ENCODE measurements at regions of chr16 and their contacts with region 1.

Region 1: GRCh38 chr16:81140930-81141780 is 45.0 kb upstream of the GCSH start:
- DNase-seq: peak; percentile 60
- H3K4me3 Mint-ChIP-seq: no peak overlapping the region
- H3K27ac Mint-ChIP-seq: peak overlapping the region; percentile 85
- H3K4me1 Mint-ChIP-seq: peaks cover 51% of the 10 kb centered on the region
- H3K27me3 Mint-ChIP-seq: no peaks in the 10 kb centered on the region
- CTCF ChIP-seq: peak; percentile 53

Region 2: DNA sequence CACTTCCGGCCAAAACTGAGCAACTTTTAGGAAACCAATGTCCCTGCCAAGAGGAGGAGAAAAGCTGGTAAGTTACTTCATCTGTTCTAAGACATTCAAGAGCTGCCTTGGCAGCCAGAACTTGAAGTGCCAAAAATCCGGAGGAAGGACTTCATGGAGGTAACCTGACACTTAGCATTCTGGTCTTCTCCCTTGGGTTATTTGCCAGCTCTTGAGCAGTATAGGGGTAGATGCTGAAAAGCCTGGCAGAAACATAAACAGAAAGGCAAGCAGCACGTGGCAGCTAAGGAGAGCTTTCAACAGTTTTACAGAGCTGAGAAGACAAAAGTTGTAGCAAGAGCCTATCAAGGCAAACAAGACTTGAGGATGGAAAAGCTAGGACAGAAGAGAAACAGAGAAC is 390.0 kb before region 1 on chr16:
- CTCF ChIA-PET with region 1: no interaction called
- intact Hi-C with region 1: no loop called
- DNase-seq: no peak
- H3K4me3 Mint-ChIP-seq: no peak overlapping the region
- H3K27ac Mint-ChIP-seq: no peak overlapping the region
- H3K4me1 Mint-ChIP-seq: no peaks in the 10 kb centered on the region
- H3K27me3 Mint-ChIP-seq: peaks cover 22% of the 10 kb centered on the region
- CTCF ChIP-seq: no peak

Region 3: DNA sequence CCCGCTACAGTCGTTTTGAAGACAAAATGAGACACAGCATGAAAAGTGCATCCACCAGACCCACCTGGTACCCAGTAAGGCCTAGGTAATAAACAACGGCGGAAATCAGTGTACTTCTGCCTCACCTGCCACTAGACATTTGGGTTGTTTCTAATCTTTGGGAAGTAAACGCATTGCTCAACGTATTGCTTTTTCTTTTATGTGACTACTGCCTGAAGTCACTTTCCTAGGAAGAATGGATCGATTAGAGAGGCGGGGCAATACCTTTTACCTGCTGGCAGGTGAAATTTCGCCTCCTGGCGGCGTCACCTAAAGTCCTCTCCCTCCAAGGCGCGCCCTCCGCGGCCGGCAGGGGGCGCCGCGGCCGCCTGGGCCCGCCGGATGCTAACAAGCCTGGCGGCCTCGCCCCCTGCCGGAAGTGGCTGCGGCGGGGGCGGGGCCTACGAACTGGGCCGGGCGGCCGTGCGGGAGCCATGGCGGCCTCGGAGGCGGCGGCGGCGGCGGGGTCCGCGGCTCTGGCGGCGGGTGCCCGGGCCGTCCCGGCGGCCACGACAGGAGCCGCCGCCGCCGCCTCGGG is 105.7 kb before region 1 on chr16 and contains the start of gene ATMIN:
- CTCF ChIA-PET with region 1: interaction called, 9 read pairs
- intact Hi-C with region 1: loop called (anchors 5 kb)
- DNase-seq: peak; percentile 97
- H3K4me3 Mint-ChIP-seq: peak within 1 kb of the TSS; percentile 80
- H3K27ac Mint-ChIP-seq: peak within 1 kb of the TSS; percentile 60
- H3K4me1 Mint-ChIP-seq: peaks cover 38% of the 10 kb centered on the region
- H3K27me3 Mint-ChIP-seq: no peaks in the 10 kb centered on the region
- CTCF ChIP-seq: peak; percentile 100
- total RNA-seq, gene ATMIN: 61.3 and 64.3 TPM in 2 replicates

Region 4: DNA sequence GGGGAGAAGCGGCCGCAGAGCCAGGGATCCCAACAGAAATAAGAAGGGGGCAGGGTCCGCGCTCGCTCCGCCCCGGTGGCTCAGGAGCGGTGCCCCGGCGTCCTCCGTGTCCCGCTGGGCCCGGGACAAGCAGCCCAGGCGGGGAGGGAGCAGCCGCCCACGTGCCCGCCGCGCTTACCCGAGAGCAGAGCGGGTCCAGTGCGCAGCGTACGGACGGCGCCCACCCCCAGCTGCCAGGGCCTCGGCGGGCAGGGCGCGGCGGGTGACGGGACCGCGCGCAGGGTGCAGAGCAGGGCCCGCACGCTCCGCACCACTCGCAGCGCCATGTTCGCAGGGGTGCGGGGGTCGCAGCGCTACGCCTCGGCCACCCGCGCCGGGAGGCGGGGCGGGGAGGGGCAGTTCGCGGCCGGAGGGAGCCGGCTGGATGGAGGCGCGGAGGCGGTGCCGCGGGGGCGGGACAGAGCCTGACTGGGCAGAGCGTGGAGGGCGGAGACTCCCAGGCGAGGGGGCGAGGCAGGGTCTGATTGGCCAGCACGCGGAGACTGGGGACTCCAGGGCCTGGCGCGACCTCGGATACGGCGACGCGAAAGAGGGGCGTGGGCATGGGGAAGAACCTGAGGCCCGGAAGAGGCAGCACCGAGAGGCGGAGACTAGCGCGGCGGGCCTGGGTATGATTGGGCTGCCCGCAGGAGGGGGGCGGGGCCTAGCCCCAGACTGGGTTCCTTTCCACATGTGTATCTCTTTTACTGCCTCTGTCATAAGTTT is 45.0 kb before region 1 on chr16 and contains the start of gene GCSH:
- CTCF ChIA-PET with region 1: interaction called, 3 read pairs
- intact Hi-C with region 1: loop called (anchors 5 kb)
- DNase-seq: peak; percentile 100
- H3K4me3 Mint-ChIP-seq: peak within 1 kb of the TSS; percentile 70
- H3K27ac Mint-ChIP-seq: peak within 1 kb of the TSS; percentile 74
- H3K4me1 Mint-ChIP-seq: peaks cover 35% of the 10 kb centered on the region
- H3K27me3 Mint-ChIP-seq: no peaks in the 10 kb centered on the region
- CTCF ChIP-seq: no peak
- total RNA-seq, gene GCSH: 85.2 and 109 TPM in 2 replicates

Region 5: DNA sequence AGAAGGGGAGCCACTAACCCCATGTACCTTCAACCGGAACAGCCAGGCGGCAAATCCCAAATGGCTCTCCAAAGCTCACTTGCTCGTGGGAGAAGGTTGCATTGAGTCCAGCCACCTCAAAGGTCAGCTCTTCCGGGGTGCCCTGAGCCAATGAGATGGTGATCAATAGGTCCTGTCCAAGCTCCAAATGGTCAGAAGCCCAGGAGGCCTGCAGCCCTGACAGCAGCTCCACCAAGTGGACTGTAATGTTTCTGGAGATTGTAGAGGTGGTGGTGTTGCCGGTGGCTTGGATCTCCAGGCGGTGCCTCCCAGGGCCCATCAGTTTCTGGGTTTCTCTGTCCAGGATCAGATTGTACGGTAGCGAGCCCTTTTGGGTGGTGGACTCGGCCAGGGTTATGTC is 57.5 kb after region 1 on chr16:
- CTCF ChIA-PET with region 1: interaction called, 4 read pairs
- intact Hi-C with region 1: loop called (anchors 2 kb)
- DNase-seq: peak; percentile 45
- H3K4me3 Mint-ChIP-seq: no peak overlapping the region
- H3K27ac Mint-ChIP-seq: no peak overlapping the region
- H3K4me1 Mint-ChIP-seq: no peaks in the 10 kb centered on the region
- H3K27me3 Mint-ChIP-seq: no peaks in the 10 kb centered on the region
- CTCF ChIP-seq: peak; percentile 19

Region 6: DNA sequence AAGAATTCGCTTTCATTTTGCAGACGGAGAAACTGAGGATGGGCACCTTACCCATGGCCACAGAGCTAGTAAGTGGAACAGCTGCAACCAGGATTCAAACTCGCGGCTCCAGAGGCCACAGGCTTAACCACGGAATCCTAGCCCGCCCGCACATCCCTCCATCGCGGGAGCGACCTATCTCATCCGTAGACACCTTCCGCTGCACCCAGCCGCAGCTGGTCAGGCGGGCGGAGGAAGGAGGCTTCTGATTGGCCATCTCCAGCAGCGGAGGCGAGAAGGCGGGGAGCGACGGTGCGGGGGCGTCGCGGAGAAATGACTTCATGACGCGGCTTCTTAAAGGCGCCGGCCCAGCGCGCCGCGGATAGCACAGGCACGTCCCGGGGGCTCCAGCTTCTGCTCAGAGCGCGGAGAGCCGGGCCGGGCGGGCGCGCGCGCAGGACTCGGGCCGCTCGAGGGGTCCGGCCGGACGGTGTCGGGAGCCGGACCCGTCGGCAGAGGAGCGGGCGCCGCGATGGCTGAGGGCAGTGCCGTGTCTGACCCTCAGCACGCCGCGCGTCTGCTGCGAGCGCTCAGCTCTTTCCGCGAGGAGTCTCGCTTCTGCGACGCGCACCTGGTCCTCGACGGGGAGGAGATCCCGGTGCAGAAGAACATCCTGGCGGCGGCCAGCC is 173.6 kb after region 1 on chr16 and contains the start of gene GAN:
- CTCF ChIA-PET with region 1: no interaction called
- intact Hi-C with region 1: loop called (anchors 1 kb)
- DNase-seq: peak; percentile 97
- H3K4me3 Mint-ChIP-seq: peak within 1 kb of the TSS; percentile 95
- H3K27ac Mint-ChIP-seq: peak within 1 kb of the TSS; percentile 80
- H3K4me1 Mint-ChIP-seq: peaks cover 57% of the 10 kb centered on the region
- H3K27me3 Mint-ChIP-seq: no peaks in the 10 kb centered on the region
- CTCF ChIP-seq: no peak
- total RNA-seq, gene GAN: 17.6 and 22.0 TPM in 2 replicates

Measured in Calu3 (cell line).